Vagina (tissue), 2 donors: ENCODE measurements at regions of chr4 and their contacts with region 1.

Region 1: DNA sequence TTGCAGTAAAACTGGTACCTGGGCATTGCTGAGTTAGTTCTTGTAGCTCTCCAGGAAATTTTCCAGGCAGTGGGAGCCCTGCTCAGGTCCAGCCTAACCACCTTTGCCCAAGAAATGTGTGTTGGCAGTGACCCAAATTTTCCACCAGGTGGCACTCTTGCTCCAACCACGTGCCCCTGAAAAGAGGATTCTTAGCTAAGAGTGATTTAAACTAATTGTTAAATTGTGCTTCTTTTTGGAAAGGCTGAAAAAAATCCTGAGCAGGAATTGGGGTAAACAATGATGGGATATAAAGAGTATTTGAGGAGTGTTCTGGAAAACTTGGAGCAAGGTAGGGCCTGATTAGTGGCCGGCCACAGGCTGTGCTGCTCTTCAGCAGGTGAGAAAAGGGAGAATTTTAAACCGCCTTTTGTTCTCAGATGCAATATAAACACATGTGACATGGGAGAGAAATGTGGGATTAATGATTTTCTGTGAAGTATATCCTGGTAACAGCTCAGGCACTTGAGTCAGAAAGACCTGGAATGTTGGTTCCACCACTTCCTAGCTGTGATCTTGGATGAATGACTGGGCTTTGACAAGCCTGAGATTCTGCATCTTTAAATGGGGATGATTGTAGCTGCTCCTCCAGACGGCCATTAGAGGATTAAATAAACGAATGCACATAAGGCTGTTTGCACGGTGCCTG is 219.6 kb downstream of the PTTG2 start:
- DNase-seq: no peak
- H3K4me3 ChIP-seq: no peak overlapping the region
- H3K27ac ChIP-seq: no peak overlapping the region
- H3K4me1 ChIP-seq: peaks cover 36% of the 10 kb centered on the region
- H3K27me3 ChIP-seq: no peaks in the 10 kb centered on the region
- CTCF ChIP-seq: peak; percentile 65 to 88 (median 86)
- POLR2A ChIP-seq: no peak

Region 2: GRCh38 chr4:38078590-38079421 is 101.0 kb before region 1 on chr4:
- intact Hi-C with region 1: loop called (anchors 10 kb)
- DNase-seq: no peak
- H3K4me3 ChIP-seq: no peak overlapping the region
- H3K27ac ChIP-seq: peak overlapping the region; percentile 30
- H3K4me1 ChIP-seq: peaks cover 41% of the 10 kb centered on the region
- H3K27me3 ChIP-seq: no peaks in the 10 kb centered on the region
- CTCF ChIP-seq: no peak
- POLR2A ChIP-seq: no peak

Region 3: GRCh38 chr4:38385093-38386004 is 205.5 kb after region 1 on chr4:
- intact Hi-C with region 1: no loop called
- DNase-seq: no peak
- H3K4me3 ChIP-seq: no peak overlapping the region
- H3K27ac ChIP-seq: no peak overlapping the region
- H3K4me1 ChIP-seq: peaks cover 42% of the 10 kb centered on the region
- H3K27me3 ChIP-seq: no peaks in the 10 kb centered on the region
- CTCF ChIP-seq: no peak
- POLR2A ChIP-seq: no peak

Region 4: DNA sequence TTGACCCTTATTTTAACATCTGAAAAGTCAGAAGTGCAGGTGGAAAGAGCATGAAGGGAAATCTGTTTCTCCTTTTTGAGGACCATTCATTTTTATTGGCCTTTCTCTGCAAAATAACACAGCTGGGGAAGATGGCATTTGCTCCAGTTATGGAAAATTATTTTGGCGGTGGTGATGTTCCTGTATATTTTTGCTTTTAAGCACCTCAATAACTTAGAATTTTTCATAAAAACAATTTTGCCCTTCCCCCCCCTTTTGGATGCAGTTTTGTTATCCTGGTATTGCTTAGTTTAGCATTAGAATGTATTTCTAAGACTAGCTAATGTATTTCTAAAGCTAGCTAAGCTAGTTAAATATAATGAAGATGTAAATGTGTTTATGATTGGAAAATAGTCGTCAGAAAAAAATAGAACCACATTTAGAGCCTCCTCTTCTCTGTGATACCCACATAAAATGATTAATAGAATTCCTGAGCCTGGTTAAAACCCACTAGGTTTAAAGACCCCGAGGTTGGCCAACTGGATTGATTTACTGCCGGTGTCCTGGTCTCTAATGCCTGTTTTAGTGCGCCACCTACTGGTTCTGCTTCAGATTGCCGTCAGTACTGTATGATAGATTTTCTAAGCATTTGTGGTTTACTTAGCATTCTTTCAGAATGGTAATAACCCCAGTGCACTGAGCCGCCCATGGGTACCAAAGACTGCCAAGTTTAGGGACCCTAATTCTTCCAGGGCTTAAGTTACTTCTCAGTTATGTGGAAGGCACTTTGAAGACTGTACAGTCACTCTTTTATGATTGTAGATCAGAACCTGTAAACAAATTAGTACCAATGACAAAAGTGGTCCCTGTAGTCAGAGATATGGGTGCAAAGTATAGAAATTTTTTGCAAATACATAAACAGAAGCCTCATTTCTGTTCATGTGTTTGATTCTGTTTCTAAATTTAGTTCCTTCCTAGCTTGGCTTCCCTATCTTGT is 495.6 kb after region 1 on chr4:
- intact Hi-C with region 1: loop called (anchors 5 kb)
- DNase-seq: no peak
- H3K4me3 ChIP-seq: peak overlapping the region in 1 of 2 donors; percentile 5
- H3K27ac ChIP-seq: peak overlapping the region; percentile 98
- H3K4me1 ChIP-seq: peaks cover 95% of the 10 kb centered on the region
- H3K27me3 ChIP-seq: no peaks in the 10 kb centered on the region
- CTCF ChIP-seq: peak; percentile 74 to 90 (median 85)
- POLR2A ChIP-seq: no peak

Region 5: GRCh38 chr4:38728631-38729144 is 548.9 kb after region 1 on chr4:
- intact Hi-C with region 1: loop called (anchors 10 kb)
- DNase-seq: no peak
- H3K4me3 ChIP-seq: no peak overlapping the region
- H3K27ac ChIP-seq: no peak overlapping the region
- H3K4me1 ChIP-seq: peaks cover 8% of the 10 kb centered on the region
- H3K27me3 ChIP-seq: no peaks in the 10 kb centered on the region
- CTCF ChIP-seq: no peak
- POLR2A ChIP-seq: no peak